Naive thymus-derived CD4-positive, alpha-beta T cell (primary cell): ENCODE measurements at regions of chr19 and their contacts with region 1.

Region 1: GRCh38 chr19:41263850-41264580 is at the start of gene HNRNPUL1:
- DNase-seq: peak; percentile 99 to 100 (median 100)
- ATAC-seq: peak; percentile 76
- H3K4me3 ChIP-seq: peak within 1 kb of the TSS; percentile 84
- H3K4me3 Mint-ChIP-seq: peak within 1 kb of the TSS; percentile 95 to 100 (median 98)
- H3K27ac ChIP-seq: peak within 1 kb of the TSS; percentile 99
- H3K27ac Mint-ChIP-seq: peak within 1 kb of the TSS; percentile 99 to 100 (median 100)
- H3K4me1 ChIP-seq: peaks cover 22 to 30% of the 10 kb centered on the region in 2 donors
- H3K4me1 Mint-ChIP-seq: peaks cover 33 to 61% (median 41%) of the 10 kb centered on the region in 7 donors
- H3K27me3 ChIP-seq: no peaks in the 10 kb centered on the region
- H3K27me3 Mint-ChIP-seq: peaks cover 0 to 8% (median 0%) of the 10 kb centered on the region in 5 donors
- total RNA-seq, gene HNRNPUL1: 253 to 319 (median 280) TPM

Region 2: DNA sequence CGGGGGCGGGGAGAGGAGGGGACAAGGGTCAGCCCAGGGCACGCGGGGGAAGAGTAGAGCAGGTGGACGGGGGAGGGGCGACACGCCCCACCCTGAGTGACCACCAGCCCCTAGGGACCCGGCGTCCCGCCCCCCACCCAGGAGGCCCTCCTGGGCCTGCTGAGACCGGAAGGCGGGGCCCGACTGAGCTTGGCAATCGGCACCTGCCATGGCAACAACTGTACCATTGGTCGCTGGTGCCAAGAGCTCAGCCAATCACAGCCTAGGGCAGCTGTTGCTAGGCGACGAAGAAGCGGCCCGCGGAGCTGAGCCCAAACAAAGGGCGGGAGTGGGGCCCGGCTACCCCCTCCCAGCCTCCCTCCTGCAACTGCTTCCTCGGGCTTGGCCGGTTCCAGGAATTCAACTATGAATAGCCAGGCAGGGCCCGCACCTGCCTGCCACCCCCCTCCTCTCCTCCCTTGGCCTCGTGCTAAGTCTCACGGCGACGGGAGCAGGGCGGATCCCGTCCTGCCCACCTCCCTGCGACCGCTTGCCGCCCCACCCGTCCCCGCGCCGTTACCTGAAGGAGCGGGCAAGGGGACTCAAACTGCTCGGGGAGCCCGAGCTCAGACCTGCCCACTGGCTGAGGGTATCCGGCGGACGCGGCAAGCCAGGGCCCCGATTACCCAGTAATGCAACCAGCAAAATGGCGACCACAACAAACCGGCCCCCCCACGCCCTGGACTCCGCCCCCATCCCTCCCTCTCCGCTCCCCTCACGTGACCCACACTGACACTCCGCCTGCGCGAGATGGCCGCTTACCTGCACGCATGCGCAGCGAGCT is 1430.3 kb before region 1 on chr19 and contains the start of gene DYRK1B:
- CTCF ChIA-PET with region 1: no interaction called
- POLR2A ChIA-PET with region 1: no interaction called
- intact Hi-C with region 1: loop called in 1 of 2 experiments (anchors 5 kb)
- DNase-seq: peak; percentile 90 to 99 (median 98)
- ATAC-seq: peak; percentile 92
- H3K4me3 ChIP-seq: peak within 1 kb of the TSS; percentile 100
- H3K4me3 Mint-ChIP-seq: peak within 1 kb of the TSS; percentile 60 to 88 (median 81)
- H3K27ac ChIP-seq: peak within 1 kb of the TSS; percentile 96
- H3K27ac Mint-ChIP-seq: peak within 1 kb of the TSS; percentile 85 to 96 (median 92)
- H3K4me1 ChIP-seq: peaks cover 17 to 23% of the 10 kb centered on the region in 2 donors
- H3K4me1 Mint-ChIP-seq: peaks cover 19 to 37% (median 27%) of the 10 kb centered on the region in 7 donors
- H3K27me3 ChIP-seq: no peaks in the 10 kb centered on the region
- H3K27me3 Mint-ChIP-seq: no peaks in the 10 kb centered on the region
- total RNA-seq, gene DYRK1B: 12.3 to 38.9 (median 23.5) TPM

Region 3: DNA sequence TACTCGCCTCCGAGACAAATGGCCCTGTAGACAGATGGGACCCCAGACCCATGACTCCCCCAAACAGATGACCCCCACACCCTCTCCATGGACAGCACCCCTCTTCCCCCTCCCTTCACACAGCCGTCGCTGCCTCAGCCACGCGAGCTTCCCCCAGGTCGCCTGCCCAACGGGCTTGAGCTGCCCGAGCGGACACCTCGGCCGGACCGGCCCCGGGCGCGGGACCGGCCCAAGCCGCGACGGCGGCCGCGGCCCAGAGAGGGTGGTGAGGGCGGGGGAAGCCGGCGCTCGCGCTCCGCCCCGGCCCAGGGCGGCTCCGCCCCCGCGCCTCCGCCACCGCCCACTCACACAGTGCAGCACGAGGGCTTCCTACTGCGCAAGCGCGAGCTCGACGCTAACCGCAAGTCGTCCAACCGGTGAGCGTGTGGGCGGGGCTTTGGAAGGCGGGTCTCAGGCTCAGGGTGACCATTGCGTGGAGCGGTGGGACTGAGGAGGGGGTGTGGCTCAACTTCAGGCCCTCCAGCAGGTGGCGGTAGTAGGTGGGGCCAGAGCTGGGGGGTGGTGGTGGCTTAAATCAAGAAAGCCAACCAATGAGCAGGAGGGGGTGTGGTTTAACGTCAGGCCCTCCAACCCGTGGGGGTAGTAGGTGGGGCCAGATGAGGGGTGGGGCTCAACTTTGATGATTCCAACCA is 693.6 kb before region 1 on chr19:
- CTCF ChIA-PET with region 1: no interaction called
- POLR2A ChIA-PET with region 1: interaction called, 6 read pairs
- intact Hi-C with region 1: loop called in 1 of 2 experiments (anchors 10 kb)
- DNase-seq: peak; percentile 90 to 97 (median 96)
- ATAC-seq: peak; percentile 94
- H3K4me3 ChIP-seq: peak overlapping the region; percentile 45
- H3K4me3 Mint-ChIP-seq: peak overlapping the region; percentile 50 to 85 (median 82)
- H3K27ac ChIP-seq: no peak overlapping the region
- H3K27ac Mint-ChIP-seq: peak overlapping the region; percentile 55 to 93 (median 81)
- H3K4me1 ChIP-seq: peaks cover 9 to 13% of the 10 kb centered on the region in 2 donors
- H3K4me1 Mint-ChIP-seq: peaks cover 10 to 27% (median 19%) of the 10 kb centered on the region in 7 donors
- H3K27me3 ChIP-seq: no peaks in the 10 kb centered on the region
- H3K27me3 Mint-ChIP-seq: peaks cover 9 to 41% (median 17%) of the 10 kb centered on the region in 5 donors

Region 4: DNA sequence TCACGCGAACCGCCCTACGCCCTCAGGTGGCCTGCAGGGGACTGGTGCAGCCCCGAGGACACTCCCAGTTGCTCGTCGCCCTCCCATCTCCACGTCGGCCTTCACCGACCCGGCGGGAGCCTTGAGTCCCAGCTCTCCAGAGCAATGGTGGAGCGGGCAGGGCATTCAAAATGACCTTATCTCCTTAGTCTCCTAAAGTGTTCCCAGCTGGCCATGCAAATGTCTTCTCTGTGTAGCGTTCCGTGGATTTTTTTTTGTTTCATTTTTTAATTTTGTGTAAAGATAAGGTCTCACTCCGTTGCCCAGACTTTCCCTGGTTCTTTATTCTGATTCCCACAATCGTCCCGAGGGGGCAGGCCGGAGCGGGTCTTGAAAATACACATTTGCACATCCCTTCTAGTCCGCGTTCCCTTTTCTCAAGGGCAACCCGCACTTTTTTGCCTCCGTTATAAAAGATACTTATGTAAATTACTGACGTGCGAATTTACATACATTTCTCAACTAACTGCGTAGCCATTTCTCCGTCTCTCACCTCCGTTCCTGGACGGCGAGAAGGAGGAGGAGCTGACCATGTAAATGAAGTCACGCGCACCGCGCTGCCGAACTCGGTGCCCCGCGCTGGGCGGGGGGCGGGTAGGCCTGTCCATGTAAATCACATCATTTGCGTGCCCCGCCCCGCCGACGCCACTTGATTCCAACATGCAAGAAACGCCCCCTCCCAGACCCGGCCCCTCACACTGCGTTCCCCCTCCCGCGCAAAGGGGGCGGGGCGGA is 465.6 kb before region 1 on chr19:
- CTCF ChIA-PET with region 1: no interaction called
- POLR2A ChIA-PET with region 1: interaction called, 8 read pairs
- intact Hi-C with region 1: loop called in 1 of 2 experiments (anchors 1 kb)
- DNase-seq: peak; percentile 48 to 100 (median 100)
- ATAC-seq: peak; percentile 92
- H3K4me3 ChIP-seq: peak overlapping the region; percentile 77
- H3K4me3 Mint-ChIP-seq: peak overlapping the region; percentile 89 to 100 (median 95)
- H3K27ac ChIP-seq: peak overlapping the region; percentile 90
- H3K27ac Mint-ChIP-seq: peak overlapping the region; percentile 96 to 100 (median 99)
- H3K4me1 ChIP-seq: peaks cover 35 to 39% of the 10 kb centered on the region in 2 donors
- H3K4me1 Mint-ChIP-seq: peaks cover 28 to 56% (median 48%) of the 10 kb centered on the region in 7 donors
- H3K27me3 ChIP-seq: no peaks in the 10 kb centered on the region
- H3K27me3 Mint-ChIP-seq: no peaks in the 10 kb centered on the region

Region 5: GRCh38 chr19:41112728-41113290 is 151.2 kb before region 1 on chr19:
- CTCF ChIA-PET with region 1: no interaction called
- POLR2A ChIA-PET with region 1: no interaction called
- intact Hi-C with region 1: no loop called
- DNase-seq: no peak
- ATAC-seq: no peak
- H3K4me3 ChIP-seq: no peak overlapping the region
- H3K4me3 Mint-ChIP-seq: no peak overlapping the region
- H3K27ac ChIP-seq: no peak overlapping the region
- H3K27ac Mint-ChIP-seq: no peak overlapping the region
- H3K4me1 ChIP-seq: no peaks in the 10 kb centered on the region
- H3K4me1 Mint-ChIP-seq: peaks cover 0 to 8% (median 0%) of the 10 kb centered on the region in 7 donors
- H3K27me3 ChIP-seq: no peaks in the 10 kb centered on the region
- H3K27me3 Mint-ChIP-seq: peaks cover 0 to 17% (median 0%) of the 10 kb centered on the region in 5 donors

Region 6: DNA sequence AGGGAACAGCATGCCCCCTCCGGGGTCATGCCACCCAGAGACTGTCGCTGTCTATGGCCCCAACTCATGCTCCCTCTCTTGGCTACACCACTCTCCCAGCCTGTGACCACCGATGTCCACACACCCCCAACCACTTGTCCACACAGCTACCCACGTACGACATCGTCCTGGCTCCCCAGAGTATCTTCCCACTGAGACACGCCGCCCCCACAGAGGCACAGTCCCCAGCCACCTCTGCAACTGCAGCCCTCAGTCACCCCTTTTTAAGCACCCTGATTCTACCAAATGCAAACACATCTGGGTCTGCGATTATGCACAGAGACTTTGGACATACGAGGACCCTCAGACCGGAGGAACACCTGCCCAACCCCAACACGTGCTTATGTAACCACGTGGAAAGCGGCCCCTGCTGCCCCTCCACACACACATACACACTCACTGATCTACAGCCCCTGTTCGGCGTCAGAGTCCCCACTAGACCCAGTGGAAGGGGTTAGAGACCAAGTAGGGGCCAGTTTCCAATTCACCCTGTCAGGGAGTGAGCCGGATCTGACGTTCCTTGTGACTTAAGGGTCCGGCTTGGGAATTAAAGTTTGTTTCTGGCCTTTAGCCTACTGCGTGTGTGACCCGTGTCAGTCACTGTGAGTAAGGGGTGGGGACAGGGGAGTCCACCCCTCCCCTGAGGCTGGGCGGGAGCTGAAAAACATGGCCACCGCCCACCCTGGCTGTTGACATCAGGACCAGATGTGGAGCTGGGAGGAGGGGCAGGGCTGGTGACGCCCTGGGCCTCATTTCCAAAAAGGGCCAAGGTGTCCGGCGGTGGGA is 56.9 kb before region 1 on chr19:
- CTCF ChIA-PET with region 1: interaction called, 55 read pairs
- POLR2A ChIA-PET with region 1: interaction called, 109 read pairs
- intact Hi-C with region 1: loop called (anchors 1 kb)
- DNase-seq: no peak
- ATAC-seq: no peak
- H3K4me3 ChIP-seq: no peak overlapping the region
- H3K4me3 Mint-ChIP-seq: no peak overlapping the region
- H3K27ac ChIP-seq: no peak overlapping the region
- H3K27ac Mint-ChIP-seq: peak overlapping the region in 6 of 9 donors; percentile 15 to 85 (median 54)
- H3K4me1 ChIP-seq: no peaks in the 10 kb centered on the region
- H3K4me1 Mint-ChIP-seq: peaks cover 3 to 12% (median 7%) of the 10 kb centered on the region in 7 donors
- H3K27me3 ChIP-seq: no peaks in the 10 kb centered on the region
- H3K27me3 Mint-ChIP-seq: no peaks in the 10 kb centered on the region

Region 7: DNA sequence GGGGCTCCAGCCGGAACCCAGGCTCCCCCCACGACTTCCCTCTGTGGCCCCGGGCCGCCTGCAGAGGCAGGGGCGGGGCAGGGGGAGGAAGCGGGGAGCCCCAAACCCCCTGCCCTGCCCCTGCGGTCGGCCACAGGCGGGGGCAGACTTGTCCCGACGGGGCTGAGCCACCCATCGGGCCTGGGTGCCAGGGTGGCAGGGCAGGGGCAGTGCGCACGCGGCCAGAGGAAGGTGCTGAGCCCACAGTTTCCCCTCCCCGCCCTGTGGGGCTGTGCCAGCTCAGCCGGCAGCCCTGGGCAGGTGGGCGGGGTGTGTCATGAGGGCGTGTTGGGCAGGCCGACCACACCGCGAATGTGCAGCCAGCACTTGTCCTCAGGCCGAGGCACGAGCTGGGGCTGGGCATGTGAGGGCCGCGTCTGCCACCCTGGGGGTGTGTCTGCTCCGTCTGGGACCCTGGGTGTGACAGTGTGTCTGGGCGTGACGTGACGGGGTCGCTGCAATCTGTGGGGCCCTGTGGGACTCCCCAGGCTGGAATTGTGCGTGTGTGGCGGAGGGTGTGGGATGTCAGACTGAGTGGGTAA is 63.7 kb after region 1 on chr19:
- CTCF ChIA-PET with region 1: interaction called, 5 read pairs
- POLR2A ChIA-PET with region 1: interaction called, 15 read pairs
- intact Hi-C with region 1: no loop called
- DNase-seq: peak; percentile 57 to 95 (median 66)
- ATAC-seq: peak; percentile 75
- H3K4me3 ChIP-seq: peak overlapping the region; percentile 42
- H3K4me3 Mint-ChIP-seq: peak overlapping the region; percentile 74 to 88 (median 82)
- H3K27ac ChIP-seq: peak overlapping the region; percentile 85
- H3K27ac Mint-ChIP-seq: peak overlapping the region; percentile 86 to 99 (median 94)
- H3K4me1 ChIP-seq: peaks cover 36 to 57% of the 10 kb centered on the region in 2 donors
- H3K4me1 Mint-ChIP-seq: peaks cover 59 to 77% (median 68%) of the 10 kb centered on the region in 7 donors
- H3K27me3 ChIP-seq: no peaks in the 10 kb centered on the region
- H3K27me3 Mint-ChIP-seq: no peaks in the 10 kb centered on the region

Region 8: DNA sequence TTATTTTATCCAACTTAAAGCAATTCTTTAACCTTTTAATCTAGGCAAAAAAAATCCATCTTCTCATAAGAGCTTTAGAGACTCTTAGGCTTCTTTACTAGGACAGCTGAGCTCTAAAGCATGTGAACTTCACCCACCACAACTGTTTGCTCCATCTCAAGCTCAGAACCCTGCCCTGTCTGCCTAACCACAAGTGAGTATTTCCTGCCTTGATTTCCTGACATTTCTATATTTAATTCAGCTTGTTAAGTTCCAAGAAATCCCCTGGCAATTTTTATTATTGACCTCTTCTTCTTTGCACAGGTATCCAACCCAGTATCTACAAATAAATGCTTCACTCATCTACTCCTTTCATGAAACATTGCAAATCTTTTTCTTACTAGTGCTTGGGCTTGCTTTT is 290.9 kb after region 1 on chr19:
- CTCF ChIA-PET with region 1: no interaction called
- POLR2A ChIA-PET with region 1: interaction called, 3 read pairs
- intact Hi-C with region 1: loop called in 1 of 2 experiments (anchors 5 kb)
- DNase-seq: peak in 7 of 9 donors; percentile 62 to 78 (median 73)
- ATAC-seq: peak; percentile 88
- H3K4me3 ChIP-seq: peak overlapping the region; percentile 77
- H3K4me3 Mint-ChIP-seq: peak overlapping the region; percentile 39 to 100 (median 97)
- H3K27ac ChIP-seq: peak overlapping the region; percentile 88
- H3K27ac Mint-ChIP-seq: peak overlapping the region; percentile 25 to 97 (median 95)
- H3K4me1 ChIP-seq: peaks cover 50 to 65% of the 10 kb centered on the region in 2 donors
- H3K4me1 Mint-ChIP-seq: peaks cover 43 to 76% (median 69%) of the 10 kb centered on the region in 7 donors
- H3K27me3 ChIP-seq: no peaks in the 10 kb centered on the region
- H3K27me3 Mint-ChIP-seq: no peaks in the 10 kb centered on the region